PC-3 (cell line): ENCODE measurements at regions of chr21 and their contacts with region 1.

Region 1: DNA sequence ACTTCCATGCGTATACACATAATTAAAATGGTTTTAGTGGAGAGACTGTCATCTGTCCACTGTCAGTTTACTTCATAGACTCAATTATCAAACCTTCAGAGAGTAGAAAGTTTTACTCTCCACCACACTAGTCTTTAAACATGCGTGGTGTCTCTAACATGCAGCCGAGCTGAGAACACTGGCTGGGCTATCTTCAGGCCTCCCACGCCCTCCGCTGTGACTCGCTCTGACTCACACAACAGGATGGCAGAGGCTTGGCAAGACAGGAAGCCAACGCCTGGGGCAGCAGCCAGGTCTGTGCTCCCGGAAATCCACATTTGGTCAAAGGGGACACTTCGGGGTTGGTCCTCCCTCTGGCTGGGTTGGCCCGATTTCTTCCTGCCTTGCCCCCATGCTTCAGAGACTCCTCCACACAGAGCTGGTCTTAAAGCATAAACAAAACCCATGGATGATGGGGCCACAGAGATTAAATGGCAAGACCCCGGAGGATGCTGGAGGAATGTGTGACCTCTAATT is 22.7 kb upstream of the IFNGR2 start:
- DNase-seq: peak; percentile 99
- ATAC-seq: peak; percentile 90
- H3K4me3 ChIP-seq: no peak overlapping the region
- H3K27ac ChIP-seq: peak overlapping the region; percentile 95
- H3K4me1 ChIP-seq: peaks cover 41% of the 10 kb centered on the region
- H3K27me3 ChIP-seq: no peaks in the 10 kb centered on the region
- CTCF ChIP-seq: no peak

Region 2: GRCh38 chr21:33403779-33404585 is 23.4 kb after region 1 on chr21:
- CTCF ChIA-PET with region 1: no interaction called
- POLR2A ChIA-PET with region 1: no interaction called
- intact Hi-C with region 1: loop called (anchors 2 kb)
- DNase-seq: peak; percentile 41
- ATAC-seq: peak; percentile 55
- H3K4me3 ChIP-seq: peak overlapping the region; percentile 85
- H3K27ac ChIP-seq: peak overlapping the region; percentile 84
- H3K4me1 ChIP-seq: peaks cover 20% of the 10 kb centered on the region
- H3K27me3 ChIP-seq: no peaks in the 10 kb centered on the region
- CTCF ChIP-seq: no peak

Region 3: DNA sequence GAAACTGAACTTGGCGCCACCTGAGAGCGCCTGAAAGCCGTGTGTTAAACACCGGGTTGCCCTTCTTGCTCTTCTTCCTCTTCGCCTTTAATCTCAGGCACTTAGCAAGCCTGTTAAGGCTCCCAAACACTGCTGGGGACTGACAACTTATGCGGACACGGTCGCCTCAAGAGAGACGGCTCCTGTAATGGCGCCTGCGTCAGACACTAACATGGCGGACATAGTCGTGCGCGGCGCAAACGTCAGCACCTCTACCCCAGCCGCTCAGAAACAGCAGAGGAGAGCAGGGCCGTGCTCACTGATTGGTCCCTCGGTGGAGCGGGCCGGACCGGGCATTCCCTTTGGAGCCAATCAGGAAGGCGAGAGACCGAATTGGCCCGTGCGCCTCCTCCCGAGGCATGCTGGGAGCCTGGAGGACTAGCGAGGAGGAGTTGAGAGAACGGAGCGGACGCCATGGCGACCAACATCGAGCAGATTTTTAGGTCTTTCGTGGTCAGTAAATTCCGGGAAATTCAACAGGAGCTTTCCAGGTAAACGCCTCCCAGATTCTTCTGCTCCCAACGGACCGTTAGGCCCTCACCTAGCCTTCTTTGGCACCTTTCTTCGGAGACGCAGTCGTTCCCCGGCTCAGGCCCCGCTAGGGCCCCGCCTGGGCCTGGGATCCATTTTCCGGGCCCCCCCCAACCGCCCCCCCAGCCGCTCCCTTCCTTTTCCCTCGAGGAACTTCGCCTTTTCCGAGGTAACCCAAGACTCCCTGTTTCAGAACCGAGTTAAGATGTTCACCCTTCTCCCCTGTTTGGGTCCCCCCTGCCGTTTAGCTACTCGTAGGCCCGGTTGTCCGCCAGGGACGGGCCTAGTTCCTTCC is 162.3 kb after region 1 on chr21 and contains the start of gene SON:
- CTCF ChIA-PET with region 1: no interaction called
- POLR2A ChIA-PET with region 1: no interaction called
- intact Hi-C with region 1: loop called (anchors 5 kb)
- DNase-seq: peak; percentile 99
- ATAC-seq: peak; percentile 95
- H3K4me3 ChIP-seq: peak within 1 kb of the TSS; percentile 94
- H3K27ac ChIP-seq: peak within 1 kb of the TSS; percentile 98
- H3K4me1 ChIP-seq: peaks cover 22% of the 10 kb centered on the region
- H3K27me3 ChIP-seq: no peaks in the 10 kb centered on the region
- CTCF ChIP-seq: no peak
- total RNA-seq, gene SON: 180 and 373 TPM in 2 replicates